ENCODE measurements at regions of chr6 and their contacts with region 1.

Region 1: DNA sequence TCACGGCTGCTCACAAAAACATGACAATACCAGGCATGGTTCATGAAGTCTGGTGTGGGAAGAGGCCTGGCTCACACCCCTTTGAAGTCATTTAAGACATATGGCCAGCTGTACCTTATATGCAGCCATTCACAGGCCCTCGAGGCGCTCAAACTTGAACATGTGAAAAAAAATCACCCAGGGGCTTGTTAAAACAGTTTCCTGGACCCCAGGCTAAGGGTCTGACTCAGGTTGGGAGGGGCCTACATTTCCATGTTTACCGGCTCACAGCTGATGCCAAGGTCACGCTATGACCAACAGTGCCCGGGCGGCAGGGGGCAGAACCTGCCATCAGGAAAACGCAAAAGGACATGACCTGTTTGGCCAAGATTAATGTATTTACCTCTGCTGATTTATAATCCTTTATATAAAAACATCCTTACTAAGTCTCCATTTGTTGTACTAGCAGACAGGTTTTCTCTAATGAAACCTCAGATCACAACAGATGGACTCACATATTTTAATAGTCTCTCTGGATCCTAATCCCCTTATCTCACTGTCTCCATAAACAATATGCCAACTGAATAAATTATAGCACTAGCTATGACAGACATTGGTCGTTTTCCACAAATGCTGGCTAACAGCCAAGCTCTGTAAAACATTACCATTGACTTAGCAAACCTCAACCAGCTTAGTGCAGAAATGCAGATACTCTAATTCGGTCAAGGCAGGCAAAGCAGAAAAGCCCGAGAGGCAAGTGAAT is 19.9 kb downstream of the EZR start:
- DNase-seq: no peak
- ATAC-seq: peak in 3 of 4 donors; percentile 18 to 47 (median 29)
- H3K4me3 ChIP-seq: no peak overlapping the region
- H3K27ac ChIP-seq: peak overlapping the region; percentile 1 to 77 (median 72)
- H3K4me1 ChIP-seq: peaks cover 3 to 93% (median 61%) of the 10 kb centered on the region in 12 donors
- H3K27me3 ChIP-seq: no peaks in the 10 kb centered on the region
- CTCF ChIP-seq: peak in 4 of 12 donors; percentile 9 to 37 (median 24)
- POLR2A ChIP-seq: no peak

Region 2: DNA sequence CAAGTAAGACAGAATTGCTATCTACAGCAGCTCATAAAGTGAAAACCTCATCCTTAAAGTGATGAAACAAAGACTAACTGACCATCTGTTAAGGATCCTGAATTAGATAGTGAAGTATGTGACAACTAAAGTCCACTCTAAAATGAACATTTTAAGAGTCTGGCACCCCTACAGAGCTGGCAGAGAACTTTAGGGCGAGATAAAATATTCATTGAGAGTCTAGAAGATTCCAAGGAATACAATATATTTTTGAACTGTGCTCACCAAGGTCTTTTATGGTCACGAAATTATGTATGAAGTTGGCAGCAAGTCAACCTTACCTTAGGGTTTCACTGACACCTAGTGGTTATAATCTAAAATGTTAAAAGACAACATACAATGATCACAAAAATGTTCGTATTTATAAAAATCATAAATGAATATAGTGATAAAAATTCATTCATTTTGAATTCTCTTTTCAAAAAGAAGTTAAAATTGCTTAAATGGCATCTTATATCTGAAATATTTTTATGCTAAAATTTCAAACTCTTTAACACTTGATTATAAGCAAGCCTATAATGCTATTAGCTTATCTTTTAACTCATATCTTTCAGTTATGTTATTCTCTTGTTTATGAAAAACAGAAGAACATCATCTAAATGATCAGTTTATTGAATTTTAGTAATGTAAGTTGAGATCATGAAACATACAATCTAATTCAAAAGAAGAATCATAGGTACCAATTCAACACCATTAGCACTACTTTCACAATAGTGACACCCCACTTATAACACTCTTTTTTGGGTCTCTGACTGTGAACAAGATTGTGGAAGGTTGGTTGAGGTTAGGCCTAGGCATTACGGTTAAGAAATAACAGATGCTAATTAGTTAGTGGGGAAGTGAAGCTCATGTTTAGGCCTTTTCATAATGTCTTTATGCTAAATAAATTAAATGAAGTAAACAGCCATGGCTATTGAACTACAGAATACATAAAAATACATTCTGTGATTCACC is 173.3 kb after region 1 on chr6:
- intact Hi-C with region 1: loop called in 5 of 10 experiments (anchors 5 to 10 kb)
- DNase-seq: no peak
- ATAC-seq: peak in 1 of 4 donors; percentile 60
- H3K4me3 ChIP-seq: no peak overlapping the region
- H3K27ac ChIP-seq: no peak overlapping the region
- H3K4me1 ChIP-seq: peaks cover 0 to 5% (median 0%) of the 10 kb centered on the region in 12 donors
- H3K27me3 ChIP-seq: no peaks in the 10 kb centered on the region
- CTCF ChIP-seq: peak; percentile 34 to 73 (median 57)
- POLR2A ChIP-seq: no peak

Region 3: GRCh38 chr6:158987657-158988056 is 188.4 kb after region 1 on chr6:
- intact Hi-C with region 1: no loop called
- DNase-seq: no peak
- ATAC-seq: no peak
- H3K4me3 ChIP-seq: no peak overlapping the region
- H3K27ac ChIP-seq: no peak overlapping the region
- H3K4me1 ChIP-seq: no peaks in the 10 kb centered on the region
- H3K27me3 ChIP-seq: no peaks in the 10 kb centered on the region
- CTCF ChIP-seq: no peak
- POLR2A ChIP-seq: no peak

Region 4: GRCh38 chr6:159324596-159324995 is 525.4 kb after region 1 on chr6:
- intact Hi-C with region 1: no loop called
- DNase-seq: no peak
- ATAC-seq: no peak
- H3K4me3 ChIP-seq: no peak overlapping the region
- H3K27ac ChIP-seq: no peak overlapping the region
- H3K4me1 ChIP-seq: no peaks in the 10 kb centered on the region
- H3K27me3 ChIP-seq: no peaks in the 10 kb centered on the region
- CTCF ChIP-seq: no peak
- POLR2A ChIP-seq: no peak